Right cardiac atrium (tissue), 5 donors: ENCODE measurements at regions of chr11 and their contacts with region 1.

Region 1: GRCh38 chr11:8099291-8099899 is 18.4 kb downstream of the TUB start:
- DNase-seq: peak; percentile 72 to 91 (median 78)
- ATAC-seq: peak; percentile 38 to 43
- H3K4me3 ChIP-seq: no peak overlapping the region
- H3K27ac ChIP-seq: no peak overlapping the region
- H3K4me1 ChIP-seq: no peaks in the 10 kb centered on the region
- H3K27me3 ChIP-seq: no peaks in the 10 kb centered on the region

Region 2: DNA sequence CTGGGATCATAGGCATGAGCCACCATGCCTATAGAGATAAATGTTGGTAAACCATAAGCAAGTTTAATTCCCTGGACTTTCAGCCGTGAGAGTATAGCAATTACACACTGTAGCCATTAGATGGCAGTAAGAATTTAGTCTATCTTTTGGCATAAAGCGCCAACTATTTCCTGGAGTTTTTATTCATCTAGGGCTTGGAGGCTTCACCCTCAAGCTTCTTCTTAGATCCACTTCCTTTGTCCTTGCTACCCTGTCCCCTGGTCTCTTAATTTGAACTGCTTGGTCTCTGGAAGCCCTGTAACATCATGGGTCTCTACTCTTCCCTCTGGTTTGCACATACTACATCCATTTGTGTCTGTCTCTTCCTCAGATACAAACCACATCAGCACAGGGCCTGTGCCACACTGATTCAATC is 206.5 kb before region 1 on chr11:
- intact Hi-C with region 1: loop called in 1 of 4 experiments (anchors 10 kb)
- DNase-seq: no peak
- ATAC-seq: peak; percentile 50 to 68
- H3K4me3 ChIP-seq: no peak overlapping the region
- H3K27ac ChIP-seq: no peak overlapping the region
- H3K4me1 ChIP-seq: peaks cover 1% of the 10 kb centered on the region
- H3K27me3 ChIP-seq: no peaks in the 10 kb centered on the region

Region 3: DNA sequence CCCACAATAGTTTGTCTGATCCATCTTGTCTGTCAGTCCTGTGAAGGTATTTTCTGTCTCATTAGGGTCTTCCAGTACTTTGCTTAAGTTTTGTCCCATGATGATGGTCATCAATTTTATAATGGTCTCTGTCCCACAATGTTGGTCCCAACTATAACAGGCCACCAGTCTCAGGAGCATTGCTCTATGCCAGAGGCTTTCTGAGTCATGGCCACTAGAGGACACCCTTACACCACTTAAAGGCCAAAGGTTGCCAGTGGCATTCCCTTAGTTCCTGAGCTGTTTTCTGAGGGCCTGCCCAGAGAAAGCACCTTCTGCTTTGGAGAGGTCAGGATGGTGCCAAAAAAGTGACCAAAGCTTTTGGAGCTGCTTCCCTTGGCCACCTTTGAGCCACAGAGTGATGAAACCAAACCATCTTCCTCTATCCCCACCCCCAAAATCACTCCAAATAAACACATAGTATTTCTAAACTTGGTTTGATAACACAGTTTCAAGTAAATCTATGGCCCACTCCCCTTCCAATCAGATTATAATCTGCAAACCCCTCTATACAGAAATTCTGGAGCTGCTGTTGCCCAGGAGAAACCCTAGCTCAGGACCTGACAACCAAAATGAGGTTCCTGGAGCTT is 92.9 kb before region 1 on chr11:
- intact Hi-C with region 1: loop called (anchors 2 to 5 kb)
- DNase-seq: peak in 2 of 3 donors; percentile 31 to 55
- ATAC-seq: peak; percentile 85 to 86
- H3K4me3 ChIP-seq: no peak overlapping the region
- H3K27ac ChIP-seq: no peak overlapping the region
- H3K4me1 ChIP-seq: no peaks in the 10 kb centered on the region
- H3K27me3 ChIP-seq: no peaks in the 10 kb centered on the region